ENCODE measurements at regions of chr16 and their contacts with region 1.

Region 1: DNA sequence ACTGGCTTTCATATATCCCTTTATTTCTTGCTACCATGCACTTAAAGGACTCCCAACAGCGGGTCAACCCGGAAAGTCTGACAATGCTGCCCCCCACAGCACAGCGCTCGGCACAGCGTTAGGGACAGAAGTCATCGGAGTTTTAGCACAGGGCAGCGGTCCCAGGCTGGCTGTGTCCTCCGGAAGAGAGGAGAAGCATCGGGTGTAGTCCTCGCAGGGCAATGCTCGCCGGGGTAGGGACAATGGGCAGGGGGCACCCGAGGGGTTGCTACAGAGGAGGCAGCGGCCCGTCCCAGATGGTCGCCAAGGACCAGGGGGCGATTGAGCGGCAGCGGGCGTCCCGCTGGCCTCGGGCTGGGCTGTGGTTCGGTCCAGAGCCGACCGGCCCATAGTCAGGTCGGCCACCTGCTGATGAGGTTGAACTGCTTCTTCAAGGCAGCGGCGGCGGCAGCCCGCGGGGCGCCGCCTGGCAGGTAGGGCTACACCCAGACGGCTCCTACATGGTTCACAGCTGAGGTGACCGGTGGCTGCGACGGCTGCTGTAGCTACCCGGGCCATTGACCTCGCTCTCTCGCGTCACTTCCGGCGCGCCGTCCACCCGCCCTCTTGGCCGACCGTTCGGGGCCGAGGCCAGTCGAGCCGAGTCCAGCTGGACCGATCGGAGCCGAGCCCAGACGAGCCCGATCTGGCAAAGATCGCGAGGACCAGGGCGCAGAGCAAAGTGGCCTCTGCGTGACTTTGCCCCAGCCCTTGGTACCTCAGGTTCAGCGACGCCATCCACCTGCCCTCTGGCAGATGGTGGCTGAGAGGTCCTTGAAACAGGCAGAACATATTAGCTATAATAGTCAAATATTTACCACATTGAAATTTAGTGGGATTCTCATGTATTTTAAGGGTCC is 4.7 kb upstream of the LCMT1 start:
- H3K4me3 Mint-ChIP-seq: peak overlapping the region; percentile 87
- H3K27ac Mint-ChIP-seq: peak overlapping the region; percentile 96
- H3K4me1 Mint-ChIP-seq: peaks cover 43% of the 10 kb centered on the region
- H3K27me3 Mint-ChIP-seq: no peaks in the 10 kb centered on the region

Region 2: DNA sequence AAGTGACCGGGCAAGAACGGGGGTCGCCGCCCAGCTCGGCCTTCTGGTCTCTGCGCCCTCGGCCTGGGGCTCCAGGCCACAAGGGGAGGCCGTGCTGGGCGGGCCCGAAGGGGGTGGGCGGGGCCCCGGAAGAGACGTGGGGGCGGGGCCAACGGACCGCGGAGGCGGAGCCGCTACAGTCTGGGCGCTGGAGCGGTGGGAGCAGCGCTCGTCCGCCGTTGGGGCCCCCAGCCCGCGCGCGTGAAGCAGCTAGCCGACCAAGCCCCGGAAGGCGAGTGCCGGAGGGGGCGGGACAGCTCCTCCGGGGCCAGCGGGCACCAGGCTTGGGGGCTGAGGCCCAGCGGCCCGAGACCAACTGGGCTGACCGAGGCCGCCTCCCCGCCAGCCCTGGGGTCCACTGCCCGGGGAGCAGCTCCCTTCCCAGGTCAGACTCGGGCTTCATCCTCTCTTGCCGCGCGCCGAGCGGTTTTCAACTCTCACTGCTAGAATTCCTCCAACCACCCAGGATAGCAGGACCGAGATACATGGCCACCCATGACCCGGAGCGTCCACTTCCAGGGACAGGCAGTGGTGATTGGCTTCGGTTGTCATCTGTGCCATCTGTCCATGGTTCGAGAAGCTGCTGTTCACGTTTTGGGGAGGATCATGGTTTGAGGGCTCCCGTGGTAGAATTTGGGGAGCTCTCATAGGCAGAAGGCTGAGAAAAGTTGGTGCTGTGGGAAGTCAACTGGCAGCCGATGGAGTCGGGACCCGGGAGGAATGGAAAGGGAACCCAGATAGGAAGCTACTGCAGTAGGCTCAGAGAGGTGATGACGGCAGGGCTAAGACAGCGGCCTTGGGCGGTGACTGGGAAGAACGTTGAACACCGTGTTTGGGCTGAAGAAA is 39.8 kb before region 1 on chr16:
- intact Hi-C with region 1: loop called (anchors 2 kb)
- H3K4me3 Mint-ChIP-seq: peak overlapping the region; percentile 85
- H3K27ac Mint-ChIP-seq: peak overlapping the region; percentile 83
- H3K4me1 Mint-ChIP-seq: peaks cover 43% of the 10 kb centered on the region
- H3K27me3 Mint-ChIP-seq: no peaks in the 10 kb centered on the region

Region 3: DNA sequence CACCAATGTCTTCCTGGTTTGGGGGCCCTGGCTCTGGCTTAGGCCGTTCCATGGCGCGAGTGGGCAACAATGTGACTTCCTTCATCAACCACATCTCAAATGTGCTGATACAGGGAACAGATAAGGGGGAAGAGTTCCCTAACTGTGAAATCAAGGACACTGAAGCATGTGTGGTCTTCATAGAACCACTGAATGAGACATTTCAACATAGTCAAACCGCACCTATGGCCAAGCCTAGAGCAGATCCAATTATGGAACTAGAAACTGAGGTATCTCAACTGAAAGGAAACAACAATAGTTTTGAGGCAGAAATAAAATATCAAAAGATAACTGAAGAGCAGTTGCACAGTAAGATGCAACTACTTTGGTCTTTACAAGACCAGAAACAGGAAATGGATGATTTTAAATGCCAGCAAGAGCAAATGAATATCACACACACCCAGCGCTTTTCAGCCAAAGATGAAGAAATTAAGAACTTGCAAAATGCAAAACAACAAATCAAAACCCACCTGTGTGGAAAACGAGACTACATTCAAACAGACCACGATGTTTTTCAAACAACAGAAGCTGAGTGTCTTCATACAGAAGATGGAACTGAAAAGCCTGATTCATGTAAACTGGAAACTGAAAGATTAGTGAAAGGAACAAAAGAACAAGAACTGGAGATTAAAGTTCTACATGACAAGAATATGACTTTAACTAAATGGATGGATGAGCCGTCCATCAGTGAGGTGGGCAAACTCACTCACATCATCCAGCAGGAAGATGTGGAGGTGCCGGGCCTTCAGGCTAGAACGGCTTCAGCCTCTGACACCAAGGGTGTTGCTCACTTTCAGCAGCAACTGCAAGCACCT is 13.4 kb before region 1 on chr16:
- intact Hi-C with region 1: loop called (anchors 2 kb)
- H3K4me3 Mint-ChIP-seq: peak overlapping the region; percentile 47
- H3K27ac Mint-ChIP-seq: peak overlapping the region; percentile 85
- H3K4me1 Mint-ChIP-seq: peaks cover 35% of the 10 kb centered on the region
- H3K27me3 Mint-ChIP-seq: no peaks in the 10 kb centered on the region